Tibial artery (tissue), 4 donors: ENCODE measurements at regions of chr1 and their contacts with region 1.

Region 1: GRCh38 chr1:62530516-62531154 is 66.7 kb upstream of the ANGPTL3 start:
- DNase-seq: peak in 1 of 2 donors; percentile 24
- H3K4me3 ChIP-seq: no peak overlapping the region
- H3K27ac ChIP-seq: no peak overlapping the region
- H3K4me1 ChIP-seq: no peaks in the 10 kb centered on the region
- H3K27me3 ChIP-seq: no peaks in the 10 kb centered on the region
- CTCF ChIP-seq: peak; percentile 47 to 62

Region 2: GRCh38 chr1:62573675-62574074 is 43.0 kb after region 1 on chr1:
- intact Hi-C with region 1: no loop called
- DNase-seq: no peak
- H3K4me3 ChIP-seq: no peak overlapping the region
- H3K27ac ChIP-seq: no peak overlapping the region
- H3K4me1 ChIP-seq: no peaks in the 10 kb centered on the region
- H3K27me3 ChIP-seq: no peaks in the 10 kb centered on the region
- CTCF ChIP-seq: no peak

Region 3: DNA sequence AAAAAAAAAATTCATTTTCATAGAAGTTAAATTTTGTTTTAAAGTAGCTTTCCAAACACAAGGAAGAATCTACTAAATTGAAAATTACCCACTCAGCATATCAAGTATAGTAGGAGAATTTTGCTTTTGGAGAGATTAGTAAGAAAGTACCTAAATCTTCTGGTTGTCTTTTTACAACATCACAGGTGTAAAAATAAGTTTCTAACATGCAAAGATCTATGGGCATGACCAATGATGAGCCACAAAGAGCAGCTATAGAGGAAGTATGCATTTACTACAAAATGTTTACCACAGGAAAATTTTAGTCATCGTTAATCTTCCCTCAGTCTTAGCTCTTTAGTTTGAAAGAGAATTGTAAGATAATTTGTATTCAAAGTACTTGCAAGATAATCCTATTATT is 94.8 kb after region 1 on chr1:
- intact Hi-C with region 1: no loop called
- DNase-seq: no peak
- H3K4me3 ChIP-seq: no peak overlapping the region
- H3K27ac ChIP-seq: no peak overlapping the region
- H3K4me1 ChIP-seq: no peaks in the 10 kb centered on the region
- H3K27me3 ChIP-seq: no peaks in the 10 kb centered on the region
- CTCF ChIP-seq: no peak

Region 4: DNA sequence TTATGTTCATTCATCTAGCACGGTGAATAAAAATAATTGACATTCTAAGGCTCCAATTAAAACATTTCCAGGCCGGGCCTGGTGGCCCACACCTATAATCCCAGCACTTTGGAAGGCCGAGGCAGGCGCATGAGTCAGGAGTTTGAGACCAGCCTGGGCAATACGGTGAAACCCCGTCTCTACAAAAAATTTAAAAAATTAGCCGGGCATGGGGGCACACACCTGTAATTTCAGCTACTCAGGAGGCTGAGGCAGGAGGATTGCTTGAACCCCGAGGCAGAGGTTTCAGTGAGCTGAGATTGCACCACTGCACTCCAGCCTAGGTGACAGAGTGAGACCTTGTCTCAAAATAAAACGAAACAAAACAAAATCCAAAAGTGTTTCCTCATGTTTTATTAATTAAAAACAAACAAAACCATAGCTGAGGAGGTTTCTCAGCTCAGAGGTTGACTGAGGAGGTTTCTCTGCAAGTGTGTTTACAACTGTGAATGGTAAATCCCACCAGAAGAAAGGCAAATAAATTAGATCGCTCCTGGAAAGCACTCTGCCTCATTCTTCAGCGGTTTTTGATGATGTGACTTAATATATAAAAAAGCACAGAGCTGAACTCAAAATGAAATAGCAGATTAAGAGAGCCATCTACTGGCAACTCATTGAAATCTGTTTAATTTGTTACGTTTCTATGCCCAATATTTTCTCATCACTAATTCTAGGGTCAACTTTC is 215.6 kb after region 1 on chr1:
- intact Hi-C with region 1: loop called (anchors 10 kb)
- DNase-seq: no peak
- H3K4me3 ChIP-seq: peak overlapping the region in 1 of 2 donors; percentile 11
- H3K27ac ChIP-seq: no peak overlapping the region
- H3K4me1 ChIP-seq: peaks cover 0 to 27% (median 11%) of the 10 kb centered on the region in 4 donors
- H3K27me3 ChIP-seq: no peaks in the 10 kb centered on the region
- CTCF ChIP-seq: peak; percentile 57 to 65